ENCODE measurements at regions of chr7 and their contacts with region 1.

Region 1: GRCh38 chr7:131107337-131108211 is 220.1 kb upstream of the MKLN1 start:
- DNase-seq: peak; percentile 83
- H3K4me3 Mint-ChIP-seq: peak overlapping the region; percentile 94
- H3K27ac Mint-ChIP-seq: peak overlapping the region; percentile 97
- H3K4me1 Mint-ChIP-seq: peaks cover 53% of the 10 kb centered on the region
- H3K27me3 Mint-ChIP-seq: no peaks in the 10 kb centered on the region

Region 2: GRCh38 chr7:130966246-130967009 is 141.1 kb before region 1 on chr7:
- CTCF ChIA-PET with region 1: no interaction called
- POLR2A ChIA-PET with region 1: interaction called, 19 read pairs
- intact Hi-C with region 1: loop called (anchors 2 kb)
- DNase-seq: peak; percentile 53
- H3K4me3 Mint-ChIP-seq: peak overlapping the region; percentile 42
- H3K27ac Mint-ChIP-seq: peak overlapping the region; percentile 94
- H3K4me1 Mint-ChIP-seq: peaks cover 77% of the 10 kb centered on the region
- H3K27me3 Mint-ChIP-seq: no peaks in the 10 kb centered on the region

Region 3: DNA sequence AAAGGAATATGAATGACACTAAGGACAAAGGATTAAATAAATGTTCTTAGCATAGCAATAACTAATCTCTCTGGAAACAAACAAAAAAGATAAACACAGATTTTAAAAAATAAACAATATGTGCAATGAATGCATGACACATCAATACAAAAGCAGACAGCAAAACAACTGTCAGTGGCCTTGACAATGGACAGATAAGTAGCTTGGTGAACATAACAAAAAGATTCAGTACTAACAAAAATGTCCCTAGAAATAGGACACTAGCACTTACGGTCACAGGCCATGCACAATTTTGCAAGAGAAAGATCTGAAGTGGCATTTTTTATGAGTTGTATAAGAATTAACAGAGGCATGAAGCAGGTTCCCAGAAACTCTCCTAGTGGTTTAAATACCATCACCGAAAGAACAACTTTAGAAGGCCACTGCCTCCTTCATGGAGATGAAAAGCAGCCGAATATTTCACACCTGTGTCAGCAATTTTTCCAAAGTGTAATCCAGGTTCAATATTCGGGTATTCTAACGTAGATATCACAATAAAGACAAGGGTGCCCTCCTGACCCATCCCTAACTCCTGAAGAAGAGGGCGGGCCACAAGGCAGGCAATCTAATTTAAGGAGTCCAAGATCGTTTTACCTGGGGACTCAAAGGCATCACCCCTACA is 11.2 kb before region 1 on chr7:
- CTCF ChIA-PET with region 1: interaction called, 3 read pairs
- POLR2A ChIA-PET with region 1: interaction called, 32 read pairs
- intact Hi-C with region 1: no loop called
- DNase-seq: no peak
- H3K4me3 Mint-ChIP-seq: no peak overlapping the region
- H3K27ac Mint-ChIP-seq: no peak overlapping the region
- H3K4me1 Mint-ChIP-seq: peaks cover 81% of the 10 kb centered on the region
- H3K27me3 Mint-ChIP-seq: no peaks in the 10 kb centered on the region

Region 4: GRCh38 chr7:131219312-131220041 is 111.9 kb after region 1 on chr7:
- CTCF ChIA-PET with region 1: no interaction called
- POLR2A ChIA-PET with region 1: no interaction called
- intact Hi-C with region 1: no loop called
- DNase-seq: no peak
- H3K4me3 Mint-ChIP-seq: no peak overlapping the region
- H3K27ac Mint-ChIP-seq: no peak overlapping the region
- H3K4me1 Mint-ChIP-seq: peaks cover 5% of the 10 kb centered on the region
- H3K27me3 Mint-ChIP-seq: no peaks in the 10 kb centered on the region

Region 5: GRCh38 chr7:131231381-131232220 is 124.0 kb after region 1 on chr7:
- CTCF ChIA-PET with region 1: interaction called, 5 read pairs
- POLR2A ChIA-PET with region 1: interaction called, 23 read pairs
- intact Hi-C with region 1: loop called (anchors 1 kb)
- DNase-seq: peak; percentile 81
- H3K4me3 Mint-ChIP-seq: peak overlapping the region; percentile 64
- H3K27ac Mint-ChIP-seq: peak overlapping the region; percentile 88
- H3K4me1 Mint-ChIP-seq: peaks cover 48% of the 10 kb centered on the region
- H3K27me3 Mint-ChIP-seq: no peaks in the 10 kb centered on the region

Region 6: DNA sequence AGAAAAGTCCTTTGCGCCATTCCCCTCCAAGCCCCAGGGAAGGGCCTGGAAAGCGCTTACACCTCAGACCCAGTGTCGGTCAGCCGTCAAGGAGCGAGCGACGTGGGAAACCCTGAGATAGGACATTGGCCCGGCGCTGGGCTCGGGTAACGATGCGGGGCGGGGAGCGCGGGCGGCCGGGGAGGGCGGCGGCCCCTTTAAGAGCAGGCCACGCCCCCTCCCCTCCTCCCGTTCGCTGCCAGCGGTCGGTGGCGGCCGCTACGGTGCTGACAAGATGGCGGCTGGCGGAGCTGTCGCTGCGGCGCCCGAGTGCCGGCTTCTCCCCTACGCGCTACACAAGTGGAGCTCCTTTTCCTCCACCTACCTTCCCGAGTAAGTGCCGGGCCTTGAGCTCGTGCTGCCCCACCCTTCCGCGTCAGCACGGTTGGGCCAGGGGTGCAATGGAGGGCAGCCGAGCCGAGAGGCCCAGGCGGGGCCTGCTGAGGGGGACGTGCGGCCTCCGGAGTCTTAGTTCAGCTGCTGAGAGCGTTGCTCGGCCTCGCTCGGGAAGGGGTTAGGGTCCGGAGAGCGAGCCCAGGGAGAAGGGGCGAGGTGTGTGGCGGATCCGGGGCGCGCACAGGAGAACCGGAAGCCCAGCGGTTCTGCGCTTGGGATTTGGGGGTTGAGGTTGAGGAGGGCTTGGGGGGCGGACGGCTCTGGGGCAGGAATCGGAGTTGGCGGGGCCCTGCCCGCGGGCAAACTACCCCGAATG is 220.2 kb after region 1 on chr7 and contains the start of gene MKLN1:
- CTCF ChIA-PET with region 1: no interaction called
- POLR2A ChIA-PET with region 1: interaction called, 9 read pairs
- intact Hi-C with region 1: loop called (anchors 1 kb)
- DNase-seq: peak; percentile 92
- H3K4me3 Mint-ChIP-seq: peak within 1 kb of the TSS; percentile 90
- H3K27ac Mint-ChIP-seq: peak within 1 kb of the TSS; percentile 95
- H3K4me1 Mint-ChIP-seq: peaks cover 59% of the 10 kb centered on the region
- H3K27me3 Mint-ChIP-seq: no peaks in the 10 kb centered on the region
- total RNA-seq, gene MKLN1: 33.0 to 33.8 TPM

Measured in activated CD4-positive, alpha-beta memory T cell treated with anti-CD3 and anti-CD28 coated beads for 36 hours (primary cell).